PC-9 (cell line): ENCODE measurements at regions of chr11 and their contacts with region 1.

Region 1: DNA sequence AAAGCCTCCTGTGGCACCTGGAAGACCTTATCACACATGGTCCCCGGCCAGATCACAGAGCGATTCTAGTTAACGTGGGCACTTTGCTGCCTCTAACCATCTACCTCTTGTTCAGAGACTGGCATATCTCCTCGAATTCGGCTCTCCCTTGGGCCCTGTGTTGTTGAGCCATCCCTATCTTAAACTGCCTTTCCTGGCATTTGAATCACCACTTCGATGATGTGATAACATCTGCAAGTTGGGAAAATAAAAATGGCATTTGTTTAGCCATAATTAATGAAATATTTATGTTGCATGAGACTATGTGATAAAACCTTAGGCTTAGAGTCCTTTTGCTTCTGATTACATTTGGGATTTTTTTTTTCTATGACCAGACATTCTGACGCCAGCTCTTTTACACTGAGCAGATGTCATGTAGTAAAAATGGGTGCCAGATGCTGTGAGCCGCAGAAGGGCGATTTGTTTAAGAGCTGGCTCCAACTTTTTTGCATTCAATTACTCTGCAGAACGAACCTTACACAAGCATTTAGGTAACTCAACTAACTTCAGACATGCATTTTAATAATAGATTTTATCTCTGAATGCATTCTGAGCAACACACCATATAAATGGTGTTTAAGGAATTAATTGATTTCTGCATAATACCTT is 58.5 kb upstream of the PARVA start:
- DNase-seq: no peak
- H3K4me3 ChIP-seq: no peak overlapping the region
- H3K27ac ChIP-seq: no peak overlapping the region
- H3K4me1 ChIP-seq: no peaks in the 10 kb centered on the region
- H3K27me3 ChIP-seq: no peaks in the 10 kb centered on the region
- CTCF ChIP-seq: no peak

Region 2: GRCh38 chr11:12448131-12448939 is 129.4 kb after region 1 on chr11:
- CTCF ChIA-PET with region 1: no interaction called
- POLR2A ChIA-PET with region 1: no interaction called
- intact Hi-C with region 1: no loop called
- DNase-seq: no peak
- H3K4me3 ChIP-seq: no peak overlapping the region
- H3K27ac ChIP-seq: no peak overlapping the region
- H3K4me1 ChIP-seq: peaks cover 17% of the 10 kb centered on the region
- H3K27me3 ChIP-seq: no peaks in the 10 kb centered on the region
- CTCF ChIP-seq: no peak

Region 3: GRCh38 chr11:12642040-12642439 is 323.1 kb after region 1 on chr11:
- CTCF ChIA-PET with region 1: interaction called, 13 read pairs
- POLR2A ChIA-PET with region 1: no interaction called
- intact Hi-C with region 1: no loop called
- DNase-seq: no peak
- H3K4me3 ChIP-seq: no peak overlapping the region
- H3K27ac ChIP-seq: no peak overlapping the region
- H3K4me1 ChIP-seq: no peaks in the 10 kb centered on the region
- H3K27me3 ChIP-seq: no peaks in the 10 kb centered on the region
- CTCF ChIP-seq: no peak